Activated CD8-positive, alpha-beta T cell treated with anti-CD3 and anti-CD28 coated beads for 36 hours (primary cell): ENCODE measurements at regions of chr2 and their contacts with region 1.

Region 1: GRCh38 chr2:75415101-75415626 is 145.6 kb downstream of the EVA1A start:
- DNase-seq: no peak
- ATAC-seq: no peak
- H3K4me3 Mint-ChIP-seq: peak overlapping the region; percentile 69
- H3K27ac Mint-ChIP-seq: no peak overlapping the region
- H3K4me1 Mint-ChIP-seq: peaks cover 29% of the 10 kb centered on the region
- H3K27me3 Mint-ChIP-seq: no peaks in the 10 kb centered on the region
- CTCF ChIP-seq: no peak

Region 2: DNA sequence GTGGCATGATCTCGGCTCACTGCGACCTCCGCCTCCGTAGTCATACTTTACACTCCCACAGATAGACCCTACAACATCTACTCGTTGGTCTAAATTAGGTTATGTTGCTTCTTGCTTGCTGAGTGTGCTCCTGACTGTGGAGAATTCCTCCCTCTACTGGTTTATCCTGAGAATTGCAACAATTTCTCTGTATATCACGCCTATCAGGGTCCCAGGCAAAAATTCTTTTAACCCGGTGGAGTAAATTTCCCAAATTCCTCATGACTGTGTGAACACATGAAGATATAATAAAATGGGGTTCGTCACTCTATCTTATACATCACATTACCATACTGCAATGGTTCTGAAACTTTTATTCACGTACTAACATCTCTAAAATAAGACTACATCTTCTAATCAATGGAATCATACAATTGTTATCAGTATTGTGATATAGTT is 11.2 kb before region 1 on chr2:
- CTCF ChIA-PET with region 1: interaction called, 11 read pairs
- POLR2A ChIA-PET with region 1: no interaction called
- intact Hi-C with region 1: no loop called
- DNase-seq: no peak
- ATAC-seq: peak; percentile 87
- H3K4me3 Mint-ChIP-seq: no peak overlapping the region
- H3K27ac Mint-ChIP-seq: no peak overlapping the region
- H3K4me1 Mint-ChIP-seq: peaks cover 23% of the 10 kb centered on the region
- H3K27me3 Mint-ChIP-seq: no peaks in the 10 kb centered on the region
- CTCF ChIP-seq: peak; percentile 86

Region 3: DNA sequence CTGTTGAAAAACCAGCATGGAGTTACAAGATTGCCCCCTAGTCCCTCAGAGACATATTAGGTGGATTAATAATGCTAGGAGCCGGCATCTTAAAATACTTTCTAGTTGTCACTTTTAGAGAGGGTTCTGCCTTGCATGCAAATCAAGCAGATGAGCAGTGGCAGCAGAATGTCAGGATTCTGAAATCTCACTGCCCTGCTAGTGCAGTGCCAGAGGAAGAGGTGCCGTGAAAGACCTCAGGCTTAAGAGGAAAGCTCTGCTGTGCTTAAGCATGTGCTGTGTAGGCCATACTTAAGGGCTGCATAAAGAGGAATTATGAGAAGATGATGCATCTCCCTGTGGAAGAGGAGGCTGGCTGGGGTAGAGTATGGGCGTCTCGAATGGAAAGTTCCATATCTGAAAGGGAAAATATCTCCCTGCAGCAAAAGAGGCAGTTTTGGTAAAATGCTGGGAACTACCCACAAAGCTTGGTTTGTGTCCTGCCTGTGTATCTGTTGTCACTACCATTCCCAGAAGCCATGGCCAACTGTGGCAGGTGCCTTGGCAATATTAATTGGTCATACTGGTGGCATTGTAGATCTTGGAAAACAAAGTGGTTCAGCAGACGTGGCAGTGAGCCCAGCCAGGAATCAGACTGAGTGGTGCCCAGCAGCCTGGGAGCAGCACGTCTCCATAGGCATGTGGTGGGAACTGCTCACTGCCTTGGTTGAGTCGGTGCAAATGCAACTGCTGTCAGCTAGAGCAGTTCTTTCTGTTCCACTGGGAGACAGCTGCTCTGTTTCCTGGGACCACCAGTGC is 13.7 kb after region 1 on chr2:
- CTCF ChIA-PET with region 1: no interaction called
- POLR2A ChIA-PET with region 1: no interaction called
- intact Hi-C with region 1: no loop called
- DNase-seq: no peak
- ATAC-seq: no peak
- H3K4me3 Mint-ChIP-seq: no peak overlapping the region
- H3K27ac Mint-ChIP-seq: no peak overlapping the region
- H3K4me1 Mint-ChIP-seq: no peaks in the 10 kb centered on the region
- H3K27me3 Mint-ChIP-seq: peaks cover 15% of the 10 kb centered on the region
- CTCF ChIP-seq: no peak

Region 4: GRCh38 chr2:75474115-75474514 is 59.0 kb after region 1 on chr2:
- CTCF ChIA-PET with region 1: no interaction called
- POLR2A ChIA-PET with region 1: no interaction called
- intact Hi-C with region 1: no loop called
- DNase-seq: no peak
- ATAC-seq: no peak
- H3K4me3 Mint-ChIP-seq: no peak overlapping the region
- H3K27ac Mint-ChIP-seq: no peak overlapping the region
- H3K4me1 Mint-ChIP-seq: no peaks in the 10 kb centered on the region
- H3K27me3 Mint-ChIP-seq: peaks cover 4% of the 10 kb centered on the region
- CTCF ChIP-seq: no peak

Region 5: DNA sequence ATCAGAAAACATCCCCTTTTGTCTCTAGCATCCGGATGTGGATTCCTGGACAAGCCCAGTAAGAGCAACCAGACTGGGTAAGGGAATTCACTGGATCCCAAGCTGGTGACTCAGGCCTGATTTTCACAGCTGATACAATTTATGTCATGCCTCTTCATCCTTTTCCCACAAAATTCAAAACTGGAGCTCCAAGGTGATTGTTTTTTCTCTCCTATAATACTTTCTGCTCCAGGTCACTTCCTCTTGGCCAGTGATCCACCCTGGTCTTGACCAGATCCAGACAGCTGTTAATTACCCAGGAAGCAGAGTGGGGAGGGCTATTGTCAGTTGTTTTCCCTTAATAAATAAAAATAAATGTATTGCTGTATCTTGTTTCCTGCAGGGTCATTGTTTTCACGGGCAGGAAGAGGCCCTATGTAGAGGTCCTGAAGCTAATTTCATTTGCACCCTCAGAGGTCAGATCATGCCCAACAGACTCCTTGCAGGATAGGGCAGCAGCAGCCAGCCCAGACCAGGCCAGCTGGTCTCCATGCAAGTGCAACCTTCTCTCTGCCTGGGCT is 88.0 kb after region 1 on chr2:
- CTCF ChIA-PET with region 1: no interaction called
- POLR2A ChIA-PET with region 1: no interaction called
- intact Hi-C with region 1: no loop called
- DNase-seq: no peak
- ATAC-seq: no peak
- H3K4me3 Mint-ChIP-seq: no peak overlapping the region
- H3K27ac Mint-ChIP-seq: no peak overlapping the region
- H3K4me1 Mint-ChIP-seq: no peaks in the 10 kb centered on the region
- H3K27me3 Mint-ChIP-seq: no peaks in the 10 kb centered on the region
- CTCF ChIP-seq: no peak